Right cardiac atrium (tissue), 5 donors: ENCODE measurements at regions of chr12 and their contacts with region 1.

Region 1: GRCh38 chr12:7806863-7807487 is 17.8 kb downstream of the NANOG start:
- DNase-seq: peak; percentile 60 to 74 (median 72)
- ATAC-seq: peak; percentile 62 to 83
- H3K4me3 ChIP-seq: no peak overlapping the region
- H3K27ac ChIP-seq: no peak overlapping the region
- H3K4me1 ChIP-seq: no peaks in the 10 kb centered on the region
- H3K27me3 ChIP-seq: no peaks in the 10 kb centered on the region

Region 2: GRCh38 chr12:7678738-7679137 is 128.2 kb before region 1 on chr12:
- intact Hi-C with region 1: loop called in 2 of 4 experiments (anchors 5 kb)
- DNase-seq: no peak
- ATAC-seq: no peak
- H3K4me3 ChIP-seq: no peak overlapping the region
- H3K27ac ChIP-seq: no peak overlapping the region
- H3K4me1 ChIP-seq: no peaks in the 10 kb centered on the region
- H3K27me3 ChIP-seq: no peaks in the 10 kb centered on the region

Region 3: DNA sequence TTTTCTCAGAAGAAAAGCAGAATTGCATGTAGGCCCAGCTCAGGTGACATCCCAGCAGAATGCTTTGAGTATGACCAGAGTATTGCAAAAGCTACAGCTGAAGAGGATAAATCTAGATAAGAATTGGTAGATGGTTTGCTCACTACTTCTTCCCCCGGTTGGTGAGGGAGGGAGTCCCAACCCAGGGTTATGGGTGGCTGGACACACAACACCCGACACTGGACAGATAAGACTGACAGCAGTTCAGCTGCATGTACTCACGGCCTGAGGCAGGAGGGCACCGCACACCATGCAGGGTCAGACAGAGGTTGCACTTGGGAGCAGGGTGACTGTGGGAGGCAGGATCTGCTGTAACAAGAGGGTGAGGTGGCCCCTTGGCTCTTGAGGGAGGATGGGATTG is 58.1 kb before region 1 on chr12:
- intact Hi-C with region 1: no loop called
- DNase-seq: no peak
- ATAC-seq: no peak
- H3K4me3 ChIP-seq: no peak overlapping the region
- H3K27ac ChIP-seq: no peak overlapping the region
- H3K4me1 ChIP-seq: no peaks in the 10 kb centered on the region
- H3K27me3 ChIP-seq: no peaks in the 10 kb centered on the region